Activated naive CD4-positive, alpha-beta T cell treated with anti-CD3 and anti-CD28 coated beads for 36 hours (primary cell): ENCODE measurements at regions of chr2 and their contacts with region 1.

Region 1: GRCh38 chr2:230847883-230848388 is 16.8 kb upstream of the ITM2C start:
- DNase-seq: peak; percentile 97
- H3K4me3 Mint-ChIP-seq: no peak overlapping the region
- H3K27ac Mint-ChIP-seq: peak overlapping the region; percentile 31
- H3K4me1 Mint-ChIP-seq: peaks cover 14% of the 10 kb centered on the region
- H3K27me3 Mint-ChIP-seq: peaks cover 13% of the 10 kb centered on the region

Region 2: DNA sequence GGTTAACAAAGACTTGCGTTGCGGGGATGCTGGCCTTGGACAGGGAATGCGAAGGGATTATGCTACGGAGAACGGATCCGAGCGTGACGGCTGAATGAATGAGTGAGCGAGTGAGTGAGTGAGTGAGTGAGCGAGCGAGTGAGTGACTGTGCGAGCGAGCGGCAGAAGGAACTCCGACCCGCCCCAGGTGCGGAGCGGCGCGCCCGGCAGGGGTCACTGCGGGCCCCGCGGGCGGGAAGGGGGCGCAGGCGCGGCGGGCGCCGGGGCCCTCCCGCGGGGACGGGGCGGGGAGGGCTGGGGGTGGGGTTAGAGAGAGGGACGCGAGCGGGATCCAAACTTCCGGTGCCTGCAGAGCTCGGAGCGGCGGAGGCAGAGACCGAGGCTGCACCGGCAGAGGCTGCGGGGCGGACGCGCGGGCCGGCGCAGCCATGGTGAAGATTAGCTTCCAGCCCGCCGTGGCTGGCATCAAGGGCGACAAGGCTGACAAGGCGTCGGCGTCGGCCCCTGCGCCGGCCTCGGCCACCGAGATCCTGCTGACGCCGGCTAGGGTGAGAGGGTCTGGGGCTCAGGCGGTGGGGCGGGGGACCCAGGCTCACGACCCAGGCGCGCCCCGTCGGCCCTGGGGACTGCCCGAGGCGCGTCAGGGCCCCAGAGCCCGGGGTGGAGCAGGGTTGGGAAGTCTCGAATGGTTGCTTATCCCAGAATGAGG is 16.8 kb after region 1 on chr2 and contains the start of gene ITM2C:
- CTCF ChIA-PET with region 1: interaction called, 19 read pairs
- intact Hi-C with region 1: loop called (anchors 1 kb)
- DNase-seq: peak; percentile 84
- H3K4me3 Mint-ChIP-seq: peak within 1 kb of the TSS; percentile 82
- H3K27ac Mint-ChIP-seq: peak within 1 kb of the TSS; percentile 3
- H3K4me1 Mint-ChIP-seq: peaks cover 45% of the 10 kb centered on the region
- H3K27me3 Mint-ChIP-seq: peaks cover 4% of the 10 kb centered on the region
- total RNA-seq, gene ITM2C: 13.0 to 13.6 TPM

Region 3: GRCh38 chr2:230913406-230914143 is 65.6 kb after region 1 on chr2:
- CTCF ChIA-PET with region 1: interaction called, 5 read pairs
- intact Hi-C with region 1: loop called (anchors 2 kb)
- DNase-seq: peak; percentile 58
- H3K4me3 Mint-ChIP-seq: no peak overlapping the region
- H3K27ac Mint-ChIP-seq: no peak overlapping the region
- H3K4me1 Mint-ChIP-seq: peaks cover 28% of the 10 kb centered on the region
- H3K27me3 Mint-ChIP-seq: peaks cover 1% of the 10 kb centered on the region